OCI-LY7 (cell line): ENCODE measurements at regions of chr17 and their contacts with region 1.

Region 1: DNA sequence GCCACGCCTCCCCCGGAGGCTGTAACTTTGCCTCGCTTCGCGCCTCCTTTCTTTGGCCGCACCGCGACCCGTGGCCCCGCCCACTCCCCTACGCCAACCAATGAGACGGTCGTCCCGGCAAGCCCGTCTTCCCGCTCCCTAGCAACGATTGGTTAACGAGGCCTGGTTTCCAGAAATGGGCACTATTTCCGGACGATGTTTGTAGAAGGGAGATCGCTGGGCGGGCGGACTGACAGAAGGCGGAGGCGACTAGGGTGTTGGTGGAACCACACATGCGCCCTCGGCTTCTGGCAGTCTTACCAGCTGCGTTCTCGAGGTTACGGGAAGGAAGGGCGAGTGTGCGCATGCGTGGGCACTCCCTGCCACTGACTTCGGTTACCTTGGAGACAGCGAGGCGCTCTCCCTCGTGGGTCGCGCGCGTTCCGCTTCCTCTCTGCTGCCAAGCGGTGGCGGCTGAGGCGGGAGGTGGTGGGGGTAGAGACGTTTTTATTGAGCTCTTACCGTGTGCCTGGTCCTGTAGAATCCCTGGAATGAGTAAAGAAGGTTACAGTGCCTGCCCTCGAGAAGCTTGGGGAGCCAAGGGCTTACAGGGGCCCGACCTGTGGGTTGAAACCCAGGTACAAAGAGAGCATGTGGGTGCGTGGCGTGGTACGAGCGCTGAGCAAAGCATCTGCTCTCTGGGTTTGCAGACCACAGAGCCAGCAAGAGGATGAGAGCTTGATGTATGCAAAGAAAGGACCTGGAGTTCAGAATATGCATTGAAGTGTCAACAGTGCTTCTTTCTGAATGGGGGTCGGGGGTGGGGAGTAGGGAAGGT is 500 bp upstream of the MAP3K14 start:
- DNase-seq: peak; percentile 100
- H3K4me3 ChIP-seq: peak overlapping the region; percentile 84
- H3K27ac ChIP-seq: peak overlapping the region; percentile 87
- H3K4me1 ChIP-seq: peaks cover 36% of the 10 kb centered on the region
- CTCF ChIP-seq: no peak

Region 2: DNA sequence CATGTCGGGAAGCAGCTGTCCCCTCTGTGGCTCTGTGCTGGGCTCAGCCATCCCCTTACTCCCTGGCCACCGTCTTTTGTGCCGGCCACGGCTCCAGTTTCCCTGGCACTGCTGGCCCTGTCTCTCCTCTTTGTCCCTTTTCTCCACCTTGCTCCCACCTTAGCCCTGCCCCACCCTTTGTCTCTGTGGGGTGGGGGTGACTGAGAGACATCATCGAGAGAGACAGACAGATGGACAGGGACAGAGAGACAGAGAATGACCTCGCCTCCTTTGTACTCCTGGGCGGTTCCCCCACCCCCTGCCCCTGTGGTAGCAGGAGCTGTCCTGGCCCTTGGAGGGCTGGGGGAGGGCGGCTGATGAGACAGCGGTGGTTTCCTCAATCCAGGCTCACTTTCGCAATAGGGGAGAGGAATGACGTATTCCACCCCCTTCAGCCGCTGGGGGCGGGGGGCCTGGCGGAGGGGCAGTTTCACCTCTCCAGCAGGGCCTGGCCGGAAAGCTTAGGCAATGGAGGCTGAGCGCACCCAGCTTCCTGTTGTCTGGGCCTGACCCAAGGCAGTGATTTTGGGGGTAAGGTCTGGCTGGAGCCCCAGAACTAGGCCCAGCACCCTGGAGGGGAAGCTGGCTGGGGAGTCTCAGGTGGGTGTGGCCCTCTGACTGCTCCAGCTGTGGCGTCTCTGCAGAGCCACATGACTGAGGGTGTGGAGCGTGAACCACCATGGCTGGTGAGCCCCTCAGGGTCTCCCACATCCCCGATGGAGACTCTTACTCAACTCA is 88.4 kb before region 1 on chr17:
- CTCF ChIA-PET with region 1: interaction called, 4 read pairs
- POLR2A ChIA-PET with region 1: interaction called, 4 read pairs
- intact Hi-C with region 1: loop called (anchors 5 kb)
- DNase-seq: peak; percentile 67
- H3K4me3 ChIP-seq: peak overlapping the region; percentile 96
- H3K27ac ChIP-seq: peak overlapping the region; percentile 97
- H3K4me1 ChIP-seq: peaks cover 75% of the 10 kb centered on the region
- CTCF ChIP-seq: no peak

Region 3: DNA sequence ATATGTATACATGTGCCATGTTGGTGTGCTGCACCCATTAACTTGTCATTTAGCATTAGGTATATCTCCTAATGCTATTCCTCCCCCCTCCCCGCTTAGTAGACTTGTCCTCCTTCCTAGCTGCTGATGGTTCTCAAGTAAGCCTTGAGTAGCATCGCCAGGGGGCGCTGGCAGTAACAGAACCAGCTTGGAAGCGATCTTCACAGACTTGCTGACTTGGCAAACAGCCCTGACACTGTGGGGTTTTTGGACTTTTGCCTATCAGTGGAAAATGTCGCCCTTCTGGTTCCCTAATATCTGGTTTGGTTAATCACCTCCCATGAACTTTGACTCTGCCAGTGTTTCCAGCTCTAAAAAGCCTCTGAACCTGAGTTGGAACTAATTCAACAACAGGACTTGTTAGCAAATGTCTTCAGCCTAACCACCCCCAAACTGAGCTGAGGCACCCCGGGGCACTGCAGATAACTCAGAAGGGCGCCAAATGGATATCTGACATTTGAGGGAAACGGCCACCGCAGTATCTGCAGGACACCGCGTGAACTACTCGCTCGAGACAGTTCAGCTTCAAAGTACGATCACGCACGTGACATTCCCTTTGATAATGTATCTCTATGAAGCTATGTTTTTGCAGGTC is 40.0 kb before region 1 on chr17:
- CTCF ChIA-PET with region 1: interaction called, 4 read pairs
- POLR2A ChIA-PET with region 1: interaction called, 3 read pairs
- intact Hi-C with region 1: loop called (anchors 1 kb)
- DNase-seq: peak; percentile 92
- H3K4me3 ChIP-seq: no peak overlapping the region
- H3K27ac ChIP-seq: no peak overlapping the region
- H3K4me1 ChIP-seq: no peaks in the 10 kb centered on the region
- CTCF ChIP-seq: peak; percentile 88

Region 4: GRCh38 chr17:45302649-45303173 is 14.6 kb before region 1 on chr17:
- CTCF ChIA-PET with region 1: interaction called, 6 read pairs
- POLR2A ChIA-PET with region 1: interaction called, 34 read pairs
- intact Hi-C with region 1: loop called (anchors 2 kb)
- DNase-seq: peak; percentile 77
- H3K4me3 ChIP-seq: peak overlapping the region; percentile 44
- H3K27ac ChIP-seq: peak overlapping the region; percentile 87
- H3K4me1 ChIP-seq: peaks cover 86% of the 10 kb centered on the region
- CTCF ChIP-seq: no peak